ENCODE measurements at regions of chr10 and their contacts with region 1.

Region 1: GRCh38 chr10:59079386-59080226 is 96.8 kb upstream of the PHYHIPL start:
- DNase-seq: no peak
- ATAC-seq: peak; percentile 81 to 89

Region 2: GRCh38 chr10:58830697-58831096 is 248.9 kb before region 1 on chr10:
- intact Hi-C with region 1: no loop called
- DNase-seq: no peak
- ATAC-seq: no peak

Region 3: DNA sequence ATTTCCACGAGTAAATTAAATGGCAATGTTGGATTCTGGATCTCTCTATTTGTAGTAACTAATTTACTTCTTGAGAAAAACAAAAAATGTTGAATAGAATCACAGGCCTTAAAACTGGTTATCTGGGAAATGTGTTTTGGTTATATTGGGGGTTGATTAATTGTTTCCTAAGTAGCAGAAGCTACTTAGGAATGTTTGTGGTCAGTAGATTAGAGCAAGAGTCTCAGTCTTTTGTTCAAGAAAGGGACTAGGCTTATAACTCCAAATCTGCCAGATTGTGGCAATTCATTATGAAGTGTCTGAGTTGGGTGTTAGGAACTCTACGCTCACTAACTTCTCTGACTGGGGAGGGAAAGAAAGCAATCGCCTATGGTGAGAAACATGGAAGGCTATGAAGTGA is 147.5 kb before region 1 on chr10:
- intact Hi-C with region 1: no loop called
- DNase-seq: no peak
- ATAC-seq: no peak

Region 4: DNA sequence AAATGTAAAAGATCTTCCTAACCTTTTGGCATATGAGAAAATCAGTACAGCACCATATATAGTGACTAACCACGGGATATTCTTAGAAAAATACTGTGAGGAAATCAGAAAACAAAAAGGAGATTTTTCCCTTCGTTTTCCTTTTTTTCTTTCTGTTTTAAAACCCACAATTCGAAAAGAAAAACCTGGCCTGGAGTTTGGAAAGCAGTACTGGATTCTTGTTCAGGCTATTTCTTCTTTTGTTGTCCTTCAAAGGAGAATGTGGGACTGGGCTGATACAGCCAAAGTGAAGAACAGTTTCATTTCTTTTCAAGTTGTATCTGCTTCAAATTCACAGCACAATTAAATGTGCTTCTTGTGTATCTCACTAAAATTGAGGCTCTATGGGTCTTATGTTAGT is 60.0 kb before region 1 on chr10:
- intact Hi-C with region 1: loop called in 1 of 2 experiments (anchors 2 kb)
- DNase-seq: no peak
- ATAC-seq: no peak